Activated naive CD4-positive, alpha-beta T cell treated with anti-CD3 and anti-CD28 coated beads for 36 hours (primary cell): ENCODE measurements at regions of chr7 and their contacts with region 1.

Region 1: GRCh38 chr7:44490351-44491200 is at the start of gene NUDCD3:
- DNase-seq: peak; percentile 89
- H3K4me3 Mint-ChIP-seq: peak within 1 kb of the TSS; percentile 85
- H3K27ac Mint-ChIP-seq: peak within 1 kb of the TSS; percentile 94
- H3K4me1 Mint-ChIP-seq: peaks cover 41% of the 10 kb centered on the region
- H3K27me3 Mint-ChIP-seq: no peaks in the 10 kb centered on the region
- total RNA-seq, gene NUDCD3: 81.1 to 81.8 TPM

Region 2: DNA sequence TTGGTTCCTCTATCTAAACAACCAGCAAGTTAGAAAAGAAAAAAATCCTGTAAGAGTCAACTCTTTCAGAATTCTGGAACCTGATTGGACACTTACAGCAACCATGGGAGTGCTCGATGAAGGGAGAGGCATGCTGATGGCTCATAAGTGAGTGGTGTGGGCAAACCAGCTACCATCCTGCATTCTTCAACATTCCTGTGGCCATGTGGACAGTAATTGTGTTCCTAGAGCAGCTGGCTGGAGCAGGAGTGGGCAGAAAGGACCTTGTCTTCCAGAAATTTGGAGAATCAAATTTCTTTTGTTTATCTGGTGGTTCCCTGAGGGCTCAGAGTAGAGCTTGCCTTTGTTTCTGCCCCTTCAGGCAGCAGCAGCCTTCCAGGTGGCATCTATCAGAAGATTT is 327.0 kb before region 1 on chr7:
- CTCF ChIA-PET with region 1: no interaction called
- intact Hi-C with region 1: no loop called
- DNase-seq: no peak
- H3K4me3 Mint-ChIP-seq: no peak overlapping the region
- H3K27ac Mint-ChIP-seq: no peak overlapping the region
- H3K4me1 Mint-ChIP-seq: peaks cover 6% of the 10 kb centered on the region
- H3K27me3 Mint-ChIP-seq: no peaks in the 10 kb centered on the region

Region 3: GRCh38 chr7:44200647-44201461 is 289.7 kb before region 1 on chr7 and contains the start of gene YKT6:
- CTCF ChIA-PET with region 1: no interaction called
- intact Hi-C with region 1: loop called (anchors 2 kb)
- DNase-seq: peak; percentile 98
- H3K4me3 Mint-ChIP-seq: peak within 1 kb of the TSS; percentile 82
- H3K27ac Mint-ChIP-seq: peak within 1 kb of the TSS; percentile 56
- H3K4me1 Mint-ChIP-seq: peaks cover 28% of the 10 kb centered on the region
- H3K27me3 Mint-ChIP-seq: no peaks in the 10 kb centered on the region
- total RNA-seq, gene YKT6: 53.5 to 57.3 TPM

Region 4: GRCh38 chr7:44257618-44258422 is 232.8 kb before region 1 on chr7:
- CTCF ChIA-PET with region 1: interaction called, 5 read pairs
- intact Hi-C with region 1: loop called (anchors 5 kb)
- DNase-seq: peak; percentile 90
- H3K4me3 Mint-ChIP-seq: peak overlapping the region; percentile 17
- H3K27ac Mint-ChIP-seq: peak overlapping the region; percentile 94
- H3K4me1 Mint-ChIP-seq: peaks cover 29% of the 10 kb centered on the region
- H3K27me3 Mint-ChIP-seq: no peaks in the 10 kb centered on the region

Region 5: GRCh38 chr7:44573464-44574286 is 83.1 kb after region 1 on chr7 and contains the start of gene DDX56:
- CTCF ChIA-PET with region 1: interaction called, 3 read pairs
- intact Hi-C with region 1: loop called (anchors 2 kb)
- DNase-seq: peak; percentile 96
- H3K4me3 Mint-ChIP-seq: peak within 1 kb of the TSS; percentile 96
- H3K27ac Mint-ChIP-seq: peak within 1 kb of the TSS; percentile 93
- H3K4me1 Mint-ChIP-seq: peaks cover 52% of the 10 kb centered on the region
- H3K27me3 Mint-ChIP-seq: no peaks in the 10 kb centered on the region
- total RNA-seq, gene DDX56: 65.8 to 74.0 TPM